MCF 10A (cell line): ENCODE measurements at regions of chr7 and their contacts with region 1.

Region 1: GRCh38 chr7:7968543-7969305 is at the start of gene GLCCI1:
- DNase-seq: peak; percentile 98
- H3K4me3 Mint-ChIP-seq: no peak within 1 kb of the TSS
- H3K27ac Mint-ChIP-seq: peak within 1 kb of the TSS; percentile 11
- H3K4me1 Mint-ChIP-seq: peaks cover 5% of the 10 kb centered on the region
- H3K27me3 Mint-ChIP-seq: no peaks in the 10 kb centered on the region
- CTCF ChIP-seq: no peak
- total RNA-seq, gene GLCCI1: 5.3 and 7.4 TPM in 2 replicates

Region 2: GRCh38 chr7:7640221-7641128 is 328.2 kb before region 1 on chr7 and contains the start of gene UMAD1:
- CTCF ChIA-PET with region 1: interaction called, 6 read pairs
- POLR2A ChIA-PET with region 1: interaction called, 20 read pairs
- intact Hi-C with region 1: no loop called
- DNase-seq: peak; percentile 99
- H3K4me3 Mint-ChIP-seq: peak within 1 kb of the TSS; percentile 96
- H3K27ac Mint-ChIP-seq: peak within 1 kb of the TSS; percentile 97
- H3K4me1 Mint-ChIP-seq: peaks cover 21% of the 10 kb centered on the region
- H3K27me3 Mint-ChIP-seq: no peaks in the 10 kb centered on the region
- CTCF ChIP-seq: no peak
- total RNA-seq, gene UMAD1: 7.1 and 11.1 TPM in 2 replicates

Region 3: GRCh38 chr7:7761340-7761980 is 207.3 kb before region 1 on chr7:
- CTCF ChIA-PET with region 1: interaction called, 11 read pairs
- POLR2A ChIA-PET with region 1: interaction called, 80 read pairs
- intact Hi-C with region 1: loop called (anchors 2 kb)
- DNase-seq: peak; percentile 64
- H3K4me3 Mint-ChIP-seq: peak overlapping the region; percentile 87
- H3K27ac Mint-ChIP-seq: peak overlapping the region; percentile 95
- H3K4me1 Mint-ChIP-seq: peaks cover 33% of the 10 kb centered on the region
- H3K27me3 Mint-ChIP-seq: no peaks in the 10 kb centered on the region
- CTCF ChIP-seq: peak; percentile 30

Region 4: GRCh38 chr7:7861211-7861633 is 107.5 kb before region 1 on chr7:
- CTCF ChIA-PET with region 1: interaction called, 4 read pairs
- POLR2A ChIA-PET with region 1: interaction called, 12 read pairs
- intact Hi-C with region 1: loop called (anchors 5 kb)
- DNase-seq: peak; percentile 81
- H3K4me3 Mint-ChIP-seq: no peak overlapping the region
- H3K27ac Mint-ChIP-seq: peak overlapping the region; percentile 89
- H3K4me1 Mint-ChIP-seq: peaks cover 11% of the 10 kb centered on the region
- H3K27me3 Mint-ChIP-seq: no peaks in the 10 kb centered on the region
- CTCF ChIP-seq: no peak

Region 5: GRCh38 chr7:7956531-7957128 is 12.1 kb before region 1 on chr7:
- CTCF ChIA-PET with region 1: interaction called, 7 read pairs
- POLR2A ChIA-PET with region 1: interaction called, 25 read pairs
- intact Hi-C with region 1: no loop called
- DNase-seq: no peak
- H3K4me3 Mint-ChIP-seq: no peak overlapping the region
- H3K27ac Mint-ChIP-seq: peak overlapping the region; percentile 25
- H3K4me1 Mint-ChIP-seq: peaks cover 14% of the 10 kb centered on the region
- H3K27me3 Mint-ChIP-seq: no peaks in the 10 kb centered on the region
- CTCF ChIP-seq: no peak